ENCODE measurements at regions of chr2 and their contacts with region 1.

Region 1: DNA sequence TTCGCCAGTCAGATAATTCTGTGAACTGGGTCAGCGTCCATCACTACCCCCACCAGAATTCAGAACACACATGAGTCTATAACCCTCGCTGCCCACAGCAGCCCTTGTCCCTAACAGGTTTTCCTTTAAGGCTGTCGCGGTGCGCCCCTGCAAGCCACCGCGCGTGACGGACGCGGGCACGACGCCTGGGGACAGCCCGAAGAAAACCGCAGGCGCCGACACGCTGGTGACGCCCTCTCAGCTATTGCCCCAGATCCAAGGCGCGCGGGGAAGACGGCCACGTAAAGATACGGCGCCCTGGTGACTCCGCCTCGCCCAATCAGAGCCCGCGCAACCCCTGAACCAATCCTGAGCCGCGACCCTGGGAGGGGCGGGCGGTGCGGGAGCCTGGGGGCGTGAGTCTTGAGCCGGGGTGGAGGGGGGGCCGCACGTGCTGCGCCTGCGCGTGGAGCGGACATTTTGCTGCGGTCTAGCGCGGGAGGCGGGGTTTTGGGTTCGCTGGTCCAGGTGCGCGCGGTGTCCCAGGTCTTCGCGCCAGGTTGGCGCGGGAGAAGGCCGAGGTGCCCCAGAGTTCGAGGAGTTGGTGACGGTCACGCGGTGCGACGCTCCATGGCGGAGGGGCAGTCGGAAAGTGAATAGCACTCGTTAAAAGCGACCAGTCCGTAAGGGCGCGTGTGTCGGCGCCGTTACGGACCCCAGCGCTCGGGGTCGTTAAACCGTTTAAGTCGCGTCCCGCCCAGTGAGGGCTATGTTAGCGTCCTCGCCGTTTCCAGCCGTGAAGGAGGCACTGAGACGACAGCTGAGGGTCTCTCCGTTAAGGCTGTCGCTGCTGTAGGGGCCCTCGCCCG is 15.9 kb downstream of the NMUR1 start:
- DNase-seq: peak; percentile 96 to 99 (median 98)
- ATAC-seq: peak; percentile 97 to 98
- H3K4me3 Mint-ChIP-seq: peak overlapping the region; percentile 82 to 94 (median 91)
- H3K27ac Mint-ChIP-seq: peak overlapping the region; percentile 91 to 99 (median 98)
- H3K4me1 Mint-ChIP-seq: peaks cover 5 to 21% (median 17%) of the 10 kb centered on the region in 4 donors
- H3K27me3 Mint-ChIP-seq: no peaks in the 10 kb centered on the region

Region 2: GRCh38 chr2:231482806-231483391 is 31.4 kb before region 1 on chr2:
- POLR2A ChIA-PET with region 1: interaction called, 28 read pairs
- DNase-seq: peak; percentile 58 to 81 (median 68)
- ATAC-seq: peak; percentile 82 to 83
- H3K4me3 Mint-ChIP-seq: peak overlapping the region; percentile 64 to 87 (median 79)
- H3K27ac Mint-ChIP-seq: peak overlapping the region; percentile 79 to 96 (median 90)
- H3K4me1 Mint-ChIP-seq: peaks cover 8 to 23% (median 15%) of the 10 kb centered on the region in 4 donors
- H3K27me3 Mint-ChIP-seq: no peaks in the 10 kb centered on the region

Region 3: DNA sequence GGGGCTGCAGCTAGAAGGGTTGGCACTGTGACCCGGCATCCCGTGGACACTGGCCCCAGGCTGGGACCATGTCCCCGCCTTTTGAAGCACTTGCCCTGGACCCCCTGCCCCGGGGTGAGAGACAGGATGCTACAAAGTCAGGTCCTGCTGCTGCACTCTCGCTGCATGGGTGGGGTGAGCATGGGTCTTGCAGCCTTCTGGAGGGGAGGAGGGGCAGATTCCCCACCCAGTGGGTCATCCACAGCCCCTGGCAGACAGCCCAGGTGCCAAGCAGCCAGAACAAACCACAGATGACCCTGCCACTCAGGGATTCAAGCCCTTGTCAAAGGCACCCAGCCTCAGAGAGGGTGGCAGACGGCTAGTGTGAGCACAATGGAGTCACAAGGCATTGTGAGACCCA is 21.6 kb after region 1 on chr2:
- POLR2A ChIA-PET with region 1: no interaction called
- DNase-seq: no peak
- ATAC-seq: no peak
- H3K4me3 Mint-ChIP-seq: no peak overlapping the region
- H3K27ac Mint-ChIP-seq: no peak overlapping the region
- H3K4me1 Mint-ChIP-seq: peaks cover 4 to 20% (median 10%) of the 10 kb centered on the region in 4 donors
- H3K27me3 Mint-ChIP-seq: peaks cover 1 to 7% (median 6%) of the 10 kb centered on the region in 5 donors

Region 4: DNA sequence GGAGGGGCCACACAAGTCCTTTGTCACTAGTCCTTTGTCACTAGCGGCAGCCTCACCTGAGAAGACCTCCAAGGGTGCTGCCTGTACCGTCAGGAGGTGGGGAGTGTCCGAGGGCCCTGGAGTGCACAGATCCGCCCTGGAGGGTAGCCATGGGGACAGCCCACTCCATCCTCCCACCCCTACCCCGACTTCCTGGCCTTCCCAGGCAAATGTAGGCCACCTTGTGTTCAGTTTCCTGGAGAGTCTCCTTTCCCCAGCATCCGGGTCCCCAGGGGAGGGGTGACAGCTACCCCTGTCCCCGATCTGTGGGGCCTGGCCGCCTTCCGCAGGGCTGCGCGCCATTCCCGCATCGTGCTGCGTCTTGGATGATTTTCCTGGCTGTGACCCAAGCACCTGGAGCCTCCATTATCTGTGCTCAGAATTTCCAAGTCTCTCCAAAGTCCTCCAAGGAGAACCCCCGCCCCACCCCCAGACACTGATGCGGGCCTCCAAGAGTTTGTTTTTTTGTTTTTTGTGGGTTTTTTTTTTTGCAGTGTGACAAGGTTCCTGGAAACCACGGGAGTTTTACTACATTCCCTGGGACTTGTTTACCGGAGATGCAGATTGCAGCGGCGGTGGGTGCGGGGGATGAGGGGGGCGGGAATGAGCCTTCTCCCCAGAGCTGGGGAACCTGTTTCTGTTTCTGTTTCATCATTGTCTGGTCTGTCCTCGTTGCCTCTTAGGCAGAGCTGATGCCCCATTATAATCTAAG is 107.0 kb after region 1 on chr2:
- POLR2A ChIA-PET with region 1: no interaction called
- DNase-seq: no peak
- ATAC-seq: no peak
- H3K4me3 Mint-ChIP-seq: no peak overlapping the region
- H3K27ac Mint-ChIP-seq: peak overlapping the region in 2 of 10 donors; percentile 15 to 76
- H3K4me1 Mint-ChIP-seq: peaks cover 1 to 9% (median 7%) of the 10 kb centered on the region in 4 donors
- H3K27me3 Mint-ChIP-seq: no peaks in the 10 kb centered on the region